K562 (cell line): ENCODE measurements at regions of chr1 and their contacts with region 1.

Region 1: DNA sequence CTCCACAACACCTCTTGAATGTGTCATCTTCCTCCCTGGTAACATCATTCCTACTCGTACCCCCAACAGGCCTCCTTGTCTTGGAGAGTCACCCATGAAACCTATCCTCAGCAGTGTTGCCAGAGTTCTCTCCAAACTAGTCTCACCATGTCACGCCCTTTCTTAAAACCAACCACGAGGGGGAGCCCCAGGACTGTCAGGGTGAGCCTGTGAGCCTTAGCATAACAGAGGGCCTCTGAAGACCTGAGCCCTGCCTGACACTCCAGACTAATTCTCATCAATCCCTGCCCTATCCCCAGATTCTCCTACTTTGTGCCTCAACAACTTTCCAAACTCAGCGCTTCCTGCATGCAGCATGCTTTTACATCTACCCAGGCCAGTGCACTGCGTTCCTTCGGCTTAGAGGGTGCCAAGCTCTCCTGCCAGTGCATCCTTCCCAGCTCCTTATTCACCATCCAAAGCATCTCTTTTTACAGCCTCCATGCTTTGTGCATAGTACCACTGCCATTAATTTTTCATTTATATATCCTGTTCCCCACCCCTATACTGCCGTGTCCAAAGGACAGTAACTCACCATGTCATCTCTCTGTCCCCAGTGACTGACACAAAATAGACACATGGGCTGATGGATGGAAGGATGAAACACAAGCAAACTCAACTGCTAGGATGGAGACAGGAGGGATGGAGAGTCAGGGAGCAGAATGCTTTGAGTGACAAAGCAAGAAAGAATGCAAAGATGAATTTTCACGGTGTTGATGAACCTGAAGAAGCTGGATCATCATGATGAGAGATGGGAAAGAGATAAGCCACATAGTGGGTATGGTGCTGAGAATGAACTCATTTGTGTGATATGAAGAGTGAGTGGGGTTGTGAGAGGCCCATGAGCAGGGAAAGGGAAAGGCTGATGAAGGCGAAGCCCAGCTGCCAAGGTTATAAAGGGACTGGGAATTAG is 34.0 kb downstream of the ZNF697 start:
- DNase-seq: peak; percentile 72 to 91 (median 74)
- ATAC-seq: peak; percentile 96
- H3K4me3 ChIP-seq: no peak overlapping the region
- H3K27ac ChIP-seq: no peak overlapping the region
- H3K4me1 ChIP-seq: no peaks in the 10 kb centered on the region; a peak in 1 of 5 replicates
- H3K27me3 ChIP-seq: peaks cover 2 to 5% of the 10 kb centered on the region in 2 experiments; a peak in 1 of 5 replicates
- CTCF ChIP-seq: peak; percentile 82 to 92 (median 91)
- EP300 ChIP-seq: no peak
- POLR2A ChIP-seq: no peak
- RAD21 ChIP-seq: peak; percentile 98 to 99

Region 2: GRCh38 chr1:119549719-119550132 is 64.3 kb before region 1 on chr1:
- CTCF ChIA-PET with region 1: interaction called, 3 read pairs
- POLR2A ChIA-PET with region 1: no interaction called
- in situ Hi-C with region 1: no loop called
- intact Hi-C with region 1: loop called (anchors 1 kb)
- DNase-seq: peak; percentile 26 to 81 (median 44)
- ATAC-seq: peak; percentile 99
- H3K4me3 ChIP-seq: no peak overlapping the region
- H3K27ac ChIP-seq: no peak overlapping the region
- H3K4me1 ChIP-seq: no peaks in the 10 kb centered on the region; a peak in 1 of 5 replicates
- H3K27me3 ChIP-seq: no peaks in the 10 kb centered on the region
- CTCF ChIP-seq: peak; percentile 67 to 79 (median 69)
- EP300 ChIP-seq: no peak
- POLR2A ChIP-seq: no peak
- RAD21 ChIP-seq: peak; percentile 61 to 76

Region 3: GRCh38 chr1:119662034-119662437 is 48.0 kb after region 1 on chr1:
- CTCF ChIA-PET with region 1: interaction called, 87 read pairs
- POLR2A ChIA-PET with region 1: interaction called, 3 read pairs
- in situ Hi-C with region 1: loop called (anchors 5 kb)
- intact Hi-C with region 1: loop called (anchors 1 kb)
- DNase-seq: peak in 1 of 4 experiments; percentile 28
- ATAC-seq: peak; percentile 24; the same call in 1 of the 3 replicates
- H3K4me3 ChIP-seq: no peak overlapping the region
- H3K27ac ChIP-seq: no peak overlapping the region
- H3K4me1 ChIP-seq: peaks cover 0 to 13% of the 10 kb centered on the region in 2 experiments; a peak in 3 of 5 replicates
- H3K27me3 ChIP-seq: peaks cover 4 to 7% of the 10 kb centered on the region in 2 experiments; a peak in 2 of 5 replicates
- CTCF ChIP-seq: no peak
- EP300 ChIP-seq: no peak
- POLR2A ChIP-seq: no peak
- RAD21 ChIP-seq: no peak; a peak in 1 of 4 replicates

Region 4: DNA sequence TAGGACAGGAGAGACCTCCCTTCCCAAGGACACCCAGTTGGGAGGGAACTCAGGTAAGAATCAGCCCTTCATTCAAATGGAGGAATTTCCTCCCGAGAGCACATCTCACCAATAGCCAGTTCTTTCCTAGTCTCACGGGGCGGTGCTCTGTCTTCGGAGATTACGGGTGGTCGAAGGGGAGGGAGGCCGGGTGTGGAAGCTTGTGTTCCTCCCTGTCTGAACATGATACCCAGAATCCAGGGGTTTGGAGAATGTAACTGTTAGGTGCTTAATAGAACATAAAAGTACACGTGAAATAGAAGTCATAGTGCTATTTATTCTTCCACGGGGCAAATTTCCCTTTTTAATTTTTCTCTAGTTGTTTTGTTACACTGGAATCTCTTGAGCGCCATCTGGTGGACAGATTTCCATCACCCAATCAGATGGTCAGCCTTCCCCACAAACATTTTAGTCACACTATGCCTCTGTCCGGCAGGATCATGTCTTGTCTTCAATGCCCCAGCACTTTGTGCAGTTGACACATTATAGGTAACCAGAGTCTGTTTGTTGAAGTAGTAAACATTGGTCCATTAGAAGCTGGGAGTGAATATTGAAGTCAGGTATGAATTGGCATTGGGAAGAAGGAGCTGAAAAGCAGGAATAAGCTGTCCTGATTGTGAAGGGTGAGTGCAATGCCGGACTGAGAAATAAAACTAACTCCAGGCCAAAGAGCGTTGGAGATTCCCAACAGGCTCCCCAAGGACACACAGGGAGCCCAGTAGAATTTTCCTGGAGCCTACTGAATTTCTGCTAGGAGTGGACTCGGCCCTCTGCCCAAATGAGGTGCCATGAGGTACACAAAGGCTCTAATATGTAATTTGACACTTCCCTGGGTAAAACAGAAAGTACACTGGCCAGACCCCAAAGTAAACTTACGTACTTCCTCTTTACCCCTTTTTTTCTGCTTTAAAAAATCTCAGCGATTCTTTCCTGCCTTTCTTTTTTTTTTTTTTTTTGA is 61.6 kb after region 1 on chr1:
- CTCF ChIA-PET with region 1: interaction called, 56 read pairs
- POLR2A ChIA-PET with region 1: no interaction called
- in situ Hi-C with region 1: no loop called
- intact Hi-C with region 1: loop called (anchors 1 kb)
- DNase-seq: peak; percentile 85 to 91 (median 86)
- ATAC-seq: peak; percentile 92
- H3K4me3 ChIP-seq: peak overlapping the region; percentile 28
- H3K27ac ChIP-seq: no peak overlapping the region
- H3K4me1 ChIP-seq: peaks cover 0 to 18% of the 10 kb centered on the region in 2 experiments; a peak in 3 of 5 replicates
- H3K27me3 ChIP-seq: no peaks in the 10 kb centered on the region
- CTCF ChIP-seq: peak; percentile 80 to 96 (median 90)
- EP300 ChIP-seq: no peak
- POLR2A ChIP-seq: no peak
- RAD21 ChIP-seq: peak; percentile 75 to 88

Region 5: DNA sequence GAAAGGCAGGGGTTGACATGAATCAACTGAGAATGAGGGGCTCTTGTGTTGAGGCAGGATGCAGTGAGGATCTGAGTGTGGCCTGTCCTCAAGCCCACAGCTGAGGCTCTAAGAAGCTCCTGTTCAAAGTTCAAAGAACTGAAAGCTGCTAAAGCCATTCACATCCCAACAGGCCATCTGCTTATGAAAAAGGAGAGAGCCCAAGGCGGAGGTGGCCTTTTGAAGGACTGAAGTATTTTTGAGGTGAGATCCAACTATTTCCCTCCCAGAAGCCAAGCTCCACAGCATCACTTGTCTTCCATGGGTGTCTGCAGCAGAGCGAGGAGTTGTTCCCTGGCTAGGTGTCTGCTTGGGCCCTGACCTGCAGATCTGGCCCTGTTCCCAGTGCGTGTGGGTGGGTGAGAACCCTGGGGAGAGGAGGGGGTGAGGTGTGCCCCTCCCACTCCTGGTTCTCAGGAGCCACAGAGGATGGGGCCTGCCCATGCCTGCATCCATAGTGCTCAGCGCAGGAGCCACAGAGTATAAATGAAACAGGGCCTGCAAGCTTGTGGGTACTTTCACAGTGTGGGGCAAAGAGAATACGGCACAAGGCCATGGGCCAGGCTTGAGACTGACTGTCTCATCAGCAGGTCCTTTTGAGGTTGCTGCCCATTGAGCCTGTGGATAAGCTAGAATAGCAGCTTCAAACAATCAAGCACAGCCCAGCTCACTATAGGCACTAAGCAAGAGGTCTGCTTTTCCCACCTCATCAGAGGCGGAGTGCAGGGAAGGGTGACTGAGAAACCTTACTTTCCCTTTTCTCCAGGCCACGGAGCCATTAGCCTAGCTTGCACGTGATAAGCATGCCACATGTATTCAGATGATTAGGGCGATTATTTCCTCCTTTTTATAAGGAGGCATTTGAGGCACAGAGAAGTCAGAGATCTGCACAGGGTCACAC is 181.5 kb after region 1 on chr1:
- CTCF ChIA-PET with region 1: no interaction called
- POLR2A ChIA-PET with region 1: no interaction called
- in situ Hi-C with region 1: no loop called
- intact Hi-C with region 1: loop called (anchors 5 kb)
- DNase-seq: no peak
- ATAC-seq: no peak
- H3K4me3 ChIP-seq: no peak overlapping the region
- H3K27ac ChIP-seq: no peak overlapping the region
- H3K4me1 ChIP-seq: no peaks in the 10 kb centered on the region
- H3K27me3 ChIP-seq: peaks cover 41 to 52% of the 10 kb centered on the region in 2 experiments
- CTCF ChIP-seq: no peak
- EP300 ChIP-seq: no peak
- POLR2A ChIP-seq: no peak
- RAD21 ChIP-seq: no peak